CD4-positive, alpha-beta memory T cell (primary cell): ENCODE measurements at regions of chr9 and their contacts with region 1.

Region 1: GRCh38 chr9:128218518-128219389 is 15.6 kb downstream of the DNM1 start:
- DNase-seq: peak; percentile 86 to 94 (median 87)
- H3K4me3 ChIP-seq: peak overlapping the region; percentile 31 to 39
- H3K4me3 Mint-ChIP-seq: peak overlapping the region; percentile 63 to 92 (median 82)
- H3K27ac ChIP-seq: no peak overlapping the region
- H3K27ac Mint-ChIP-seq: peak overlapping the region; percentile 54 to 93 (median 75)
- H3K4me1 ChIP-seq: peaks cover 15% of the 10 kb centered on the region
- H3K4me1 Mint-ChIP-seq: peaks cover 7 to 17% (median 12%) of the 10 kb centered on the region in 4 donors
- H3K27me3 ChIP-seq: no peaks in the 10 kb centered on the region
- H3K27me3 Mint-ChIP-seq: no peaks in the 10 kb centered on the region

Region 2: GRCh38 chr9:127991757-127992274 is 226.9 kb before region 1 on chr9:
- CTCF ChIA-PET with region 1: no interaction called
- POLR2A ChIA-PET with region 1: no interaction called
- intact Hi-C with region 1: no loop called
- DNase-seq: no peak
- H3K4me3 ChIP-seq: no peak overlapping the region
- H3K4me3 Mint-ChIP-seq: peak overlapping the region in 1 of 8 donors; percentile 6
- H3K27ac ChIP-seq: no peak overlapping the region
- H3K27ac Mint-ChIP-seq: peak overlapping the region in 5 of 7 donors; percentile 14 to 57 (median 32)
- H3K4me1 ChIP-seq: peaks cover 12% of the 10 kb centered on the region
- H3K4me1 Mint-ChIP-seq: peaks cover 11 to 22% (median 15%) of the 10 kb centered on the region in 4 donors
- H3K27me3 ChIP-seq: no peaks in the 10 kb centered on the region
- H3K27me3 Mint-ChIP-seq: no peaks in the 10 kb centered on the region

Region 3: GRCh38 chr9:128249908-128250838 is 31.4 kb after region 1 on chr9:
- CTCF ChIA-PET with region 1: interaction called, 4 read pairs
- POLR2A ChIA-PET with region 1: interaction called, 13 read pairs
- intact Hi-C with region 1: loop called (anchors 1 kb)
- DNase-seq: peak; percentile 95 to 98 (median 96)
- H3K4me3 ChIP-seq: peak overlapping the region in 1 of 2 donors; percentile 75
- H3K4me3 Mint-ChIP-seq: peak overlapping the region; percentile 84 to 93 (median 87)
- H3K27ac ChIP-seq: peak overlapping the region; percentile 56
- H3K27ac Mint-ChIP-seq: peak overlapping the region; percentile 77 to 97 (median 94)
- H3K4me1 ChIP-seq: peaks cover 22% of the 10 kb centered on the region
- H3K4me1 Mint-ChIP-seq: peaks cover 10 to 30% (median 19%) of the 10 kb centered on the region in 4 donors
- H3K27me3 ChIP-seq: no peaks in the 10 kb centered on the region
- H3K27me3 Mint-ChIP-seq: peaks cover 4 to 5% of the 10 kb centered on the region in 2 donors

Region 4: GRCh38 chr9:129446828-129447550 is 1228.2 kb after region 1 on chr9:
- CTCF ChIA-PET with region 1: no interaction called
- POLR2A ChIA-PET with region 1: no interaction called
- intact Hi-C with region 1: no loop called
- DNase-seq: no peak
- H3K4me3 ChIP-seq: no peak overlapping the region
- H3K4me3 Mint-ChIP-seq: no peak overlapping the region
- H3K27ac ChIP-seq: no peak overlapping the region
- H3K27ac Mint-ChIP-seq: peak overlapping the region in 1 of 7 donors; percentile 57
- H3K4me1 ChIP-seq: no peaks in the 10 kb centered on the region
- H3K4me1 Mint-ChIP-seq: peaks cover 0 to 6% (median 2%) of the 10 kb centered on the region in 4 donors
- H3K27me3 ChIP-seq: no peaks in the 10 kb centered on the region
- H3K27me3 Mint-ChIP-seq: peaks cover 2 to 6% of the 10 kb centered on the region in 2 donors